ENCODE measurements at regions of chr12 and their contacts with region 1.

Region 1: GRCh38 chr12:118372541-118373495 is at the start of gene TAOK3:
- DNase-seq: peak; percentile 94
- H3K4me3 Mint-ChIP-seq: peak within 1 kb of the TSS; percentile 97
- H3K27ac Mint-ChIP-seq: peak within 1 kb of the TSS; percentile 77
- H3K4me1 Mint-ChIP-seq: peaks cover 52% of the 10 kb centered on the region
- H3K27me3 Mint-ChIP-seq: peaks cover 13% of the 10 kb centered on the region
- total RNA-seq, gene TAOK3: 59.5 and 59.7 TPM in 2 replicates

Region 2: GRCh38 chr12:117874842-117875434 is 497.9 kb before region 1 on chr12:
- intact Hi-C with region 1: loop called (anchors 2 kb)
- DNase-seq: peak; percentile 34
- H3K4me3 Mint-ChIP-seq: no peak overlapping the region
- H3K27ac Mint-ChIP-seq: no peak overlapping the region
- H3K4me1 Mint-ChIP-seq: peaks cover 12% of the 10 kb centered on the region
- H3K27me3 Mint-ChIP-seq: peaks cover 27% of the 10 kb centered on the region

Region 3: GRCh38 chr12:118061011-118061875 is 311.6 kb before region 1 on chr12 and contains the start of gene WSB2:
- intact Hi-C with region 1: loop called (anchors 2 kb)
- DNase-seq: peak; percentile 48
- H3K4me3 Mint-ChIP-seq: peak within 1 kb of the TSS; percentile 92
- H3K27ac Mint-ChIP-seq: peak within 1 kb of the TSS; percentile 94
- H3K4me1 Mint-ChIP-seq: peaks cover 55% of the 10 kb centered on the region
- H3K27me3 Mint-ChIP-seq: no peaks in the 10 kb centered on the region
- total RNA-seq, gene WSB2: 122 and 127 TPM in 2 replicates

Region 4: GRCh38 chr12:118164798-118165486 is 207.9 kb before region 1 on chr12:
- intact Hi-C with region 1: loop called (anchors 1 kb)
- DNase-seq: no peak
- H3K4me3 Mint-ChIP-seq: no peak overlapping the region
- H3K27ac Mint-ChIP-seq: no peak overlapping the region
- H3K4me1 Mint-ChIP-seq: peaks cover 24% of the 10 kb centered on the region
- H3K27me3 Mint-ChIP-seq: no peaks in the 10 kb centered on the region

Region 5: GRCh38 chr12:118290130-118290529 is 82.7 kb before region 1 on chr12:
- intact Hi-C with region 1: no loop called
- DNase-seq: no peak
- H3K4me3 Mint-ChIP-seq: no peak overlapping the region
- H3K27ac Mint-ChIP-seq: no peak overlapping the region
- H3K4me1 Mint-ChIP-seq: no peaks in the 10 kb centered on the region
- H3K27me3 Mint-ChIP-seq: no peaks in the 10 kb centered on the region

Region 6: DNA sequence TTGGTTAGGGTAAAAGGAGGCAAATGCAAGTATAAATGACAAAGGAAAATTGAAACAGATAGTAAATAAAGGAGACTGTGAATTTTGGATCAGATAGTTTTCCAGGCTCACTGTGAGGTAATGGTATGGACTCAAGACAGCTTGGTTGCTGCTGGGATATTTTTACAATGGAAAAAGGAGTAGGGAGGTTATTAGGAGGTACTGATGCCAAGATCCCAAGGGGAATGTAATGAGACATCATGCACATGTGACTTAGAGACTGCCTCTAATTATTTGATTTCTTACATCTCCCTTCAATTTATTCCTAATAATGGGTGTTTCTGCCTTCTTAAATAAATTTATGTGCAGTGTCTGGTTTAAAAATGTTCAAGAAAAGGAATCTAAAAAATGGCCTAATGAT is 57.0 kb before region 1 on chr12:
- intact Hi-C with region 1: loop called (anchors 2 kb)
- DNase-seq: no peak
- H3K4me3 Mint-ChIP-seq: no peak overlapping the region
- H3K27ac Mint-ChIP-seq: no peak overlapping the region
- H3K4me1 Mint-ChIP-seq: peaks cover 34% of the 10 kb centered on the region
- H3K27me3 Mint-ChIP-seq: no peaks in the 10 kb centered on the region

Region 7: DNA sequence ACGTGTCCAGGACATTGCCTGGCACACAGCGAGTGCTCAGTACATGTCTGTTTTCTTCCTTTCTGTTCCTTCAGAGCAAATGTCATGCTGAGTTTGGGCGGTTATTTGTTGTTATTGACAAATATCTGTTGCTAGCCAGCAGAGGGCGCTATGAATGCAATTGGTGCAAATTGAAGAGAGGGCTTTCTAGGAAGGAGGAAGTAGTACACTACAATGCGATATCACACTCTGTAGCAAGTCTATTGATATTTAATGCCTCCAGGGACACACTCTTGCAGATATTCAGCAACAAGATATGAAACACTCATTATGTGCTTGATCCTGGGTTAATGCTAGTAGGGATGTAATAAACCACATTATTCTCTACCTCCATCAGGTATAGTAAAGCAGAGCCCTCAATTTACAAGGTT is 341.2 kb after region 1 on chr12:
- intact Hi-C with region 1: no loop called
- DNase-seq: no peak
- H3K4me3 Mint-ChIP-seq: no peak overlapping the region
- H3K27ac Mint-ChIP-seq: no peak overlapping the region
- H3K4me1 Mint-ChIP-seq: no peaks in the 10 kb centered on the region
- H3K27me3 Mint-ChIP-seq: no peaks in the 10 kb centered on the region

Measured in activated T-helper 1 cell treated with anti-CD3 and anti-CD28 coated beads, Interleukin-12 subunit alpha, Interleukin-12 subunit beta, Interleukin-2, Interleukin-4 antibody, amounts not matched to agents 30 ng/mL and 10 ng/mL and 1 ng/mL, durations not matched to agents 14 hours and 24 hours and 36 hours (primary cell).